ENCODE measurements at regions of chr12 and their contacts with region 1.

Region 1: GRCh38 chr12:104671407-104672098 is 214.8 kb downstream of the CHST11 start:
- DNase-seq: peak; percentile 90
- ATAC-seq: peak; percentile 12

Region 2: DNA sequence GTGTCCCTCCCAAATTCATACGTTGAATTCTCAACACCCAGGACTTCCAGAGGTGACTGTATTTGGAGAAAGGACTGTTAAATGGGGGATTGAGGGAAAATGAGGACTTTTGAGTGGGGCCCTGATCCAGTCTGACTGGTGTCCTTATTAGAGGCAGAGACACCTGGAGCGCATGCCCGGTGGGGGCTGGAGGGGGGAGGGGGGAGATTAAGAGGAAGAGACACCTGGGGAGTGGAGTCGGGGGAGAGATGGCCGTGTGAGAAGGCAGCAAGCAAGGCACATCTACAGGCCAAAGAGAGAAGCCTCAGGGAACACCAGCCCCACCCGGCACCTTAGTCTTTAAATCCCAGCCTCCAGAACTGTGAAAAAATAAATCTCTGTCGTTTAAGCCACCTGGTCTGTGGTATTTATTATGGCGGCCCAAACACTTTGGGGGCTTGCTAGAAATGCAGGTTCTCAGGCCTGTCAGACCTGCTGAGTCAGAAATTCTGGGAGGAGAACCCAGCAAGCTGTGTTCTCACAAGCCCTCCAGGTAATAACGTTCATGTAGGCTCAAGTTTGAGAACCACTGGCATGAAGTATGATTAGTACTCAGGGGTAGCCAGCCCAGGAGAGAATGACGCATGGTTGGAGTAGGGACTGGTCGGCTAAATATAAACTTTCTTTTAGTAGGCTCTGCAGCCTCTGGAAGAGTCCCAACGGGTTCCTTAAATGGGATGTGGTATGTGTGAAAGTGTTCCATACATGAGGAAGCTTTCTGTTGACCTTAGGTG is 77.0 kb after region 1 on chr12:
- intact Hi-C with region 1: loop called (anchors 2 kb)
- DNase-seq: no peak
- ATAC-seq: peak; percentile 79